Activated CD8-positive, alpha-beta T cell treated with anti-CD3 and anti-CD28 coated beads for 36 hours (primary cell): ENCODE measurements at regions of chr9 and their contacts with region 1.

Region 1: GRCh38 chr9:35611230-35611797 is 6.3 kb downstream of the TESK1 start:
- DNase-seq: peak; percentile 77
- ATAC-seq: peak; percentile 94
- H3K4me3 Mint-ChIP-seq: no peak overlapping the region
- H3K27ac Mint-ChIP-seq: no peak overlapping the region
- H3K4me1 Mint-ChIP-seq: peaks cover 16% of the 10 kb centered on the region
- H3K27me3 Mint-ChIP-seq: no peaks in the 10 kb centered on the region
- CTCF ChIP-seq: peak; percentile 79

Region 2: GRCh38 chr9:35193762-35194161 is 417.6 kb before region 1 on chr9:
- CTCF ChIA-PET with region 1: no interaction called
- POLR2A ChIA-PET with region 1: no interaction called
- intact Hi-C with region 1: no loop called
- DNase-seq: no peak
- ATAC-seq: no peak
- H3K4me3 Mint-ChIP-seq: no peak overlapping the region
- H3K27ac Mint-ChIP-seq: no peak overlapping the region
- H3K4me1 Mint-ChIP-seq: no peaks in the 10 kb centered on the region
- H3K27me3 Mint-ChIP-seq: no peaks in the 10 kb centered on the region
- CTCF ChIP-seq: no peak

Region 3: DNA sequence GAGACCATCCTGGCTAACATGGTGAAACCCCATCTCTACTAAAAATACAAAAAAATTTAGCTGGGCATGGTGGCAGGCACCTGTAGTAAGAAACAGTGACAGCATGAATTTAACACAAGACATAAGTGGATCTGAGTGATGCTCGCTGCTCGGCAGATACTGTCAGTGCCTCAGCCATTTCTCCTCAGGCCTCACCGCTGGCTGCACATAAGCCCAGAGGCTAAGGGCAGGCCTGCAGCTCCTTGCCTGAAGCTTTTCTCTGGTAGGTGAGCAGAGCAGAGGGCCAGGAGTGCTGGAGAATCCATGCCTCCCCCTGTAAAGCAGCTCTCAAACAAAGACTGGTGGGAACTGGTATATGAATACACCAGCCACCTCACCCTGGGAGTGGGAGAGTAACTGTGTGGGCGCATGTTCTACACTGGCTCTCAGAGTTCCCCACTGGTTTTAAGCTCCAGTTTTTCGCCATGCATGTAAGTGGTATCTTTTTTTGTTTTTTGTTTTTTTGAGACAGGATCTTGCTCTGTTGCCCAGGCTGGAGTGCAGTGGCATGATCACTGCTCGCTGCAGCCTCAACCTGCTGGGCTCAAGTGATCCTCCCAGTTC is 17.2 kb after region 1 on chr9:
- CTCF ChIA-PET with region 1: interaction called, 25 read pairs
- POLR2A ChIA-PET with region 1: interaction called, 3 read pairs
- intact Hi-C with region 1: no loop called
- DNase-seq: no peak
- ATAC-seq: no peak
- H3K4me3 Mint-ChIP-seq: no peak overlapping the region
- H3K27ac Mint-ChIP-seq: no peak overlapping the region
- H3K4me1 Mint-ChIP-seq: peaks cover 16% of the 10 kb centered on the region
- H3K27me3 Mint-ChIP-seq: no peaks in the 10 kb centered on the region
- CTCF ChIP-seq: no peak

Region 4: DNA sequence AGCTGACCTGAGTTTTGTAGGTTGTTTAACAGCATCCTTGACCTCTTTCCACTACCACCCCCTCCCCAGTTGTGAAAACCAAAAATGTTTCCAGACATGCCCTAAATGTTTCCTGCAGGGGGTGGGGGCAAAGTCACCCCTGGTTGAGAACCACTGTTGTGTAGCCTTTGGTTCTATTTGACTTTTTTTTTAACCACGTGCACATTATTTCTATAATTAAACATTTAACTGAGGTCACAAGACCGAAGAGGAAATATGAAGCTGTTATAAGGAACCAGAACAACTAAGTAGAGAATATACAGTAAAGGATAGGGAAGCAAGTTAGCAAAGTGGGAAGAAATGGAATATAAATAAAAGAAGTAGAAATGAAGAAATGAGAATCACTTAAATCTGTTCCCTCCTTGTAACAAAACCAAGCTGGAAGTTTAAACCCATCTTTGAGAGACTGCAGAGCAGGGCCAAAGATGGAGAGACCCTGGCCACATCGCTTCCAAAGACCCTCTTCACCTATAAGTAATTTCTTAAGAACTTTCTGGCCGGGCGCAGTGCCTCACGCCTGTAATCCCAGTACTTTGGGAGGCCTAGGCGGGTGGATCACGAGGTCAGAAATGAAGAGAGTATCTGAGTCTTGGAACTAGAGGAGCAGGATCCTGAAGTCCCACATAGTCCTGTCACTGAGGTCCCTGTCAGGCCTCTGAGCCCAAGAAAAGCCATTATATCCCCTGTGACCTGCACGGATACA is 25.0 kb after region 1 on chr9:
- CTCF ChIA-PET with region 1: interaction called, 25 read pairs
- POLR2A ChIA-PET with region 1: interaction called, 3 read pairs
- intact Hi-C with region 1: no loop called
- DNase-seq: no peak
- ATAC-seq: no peak
- H3K4me3 Mint-ChIP-seq: no peak overlapping the region
- H3K27ac Mint-ChIP-seq: peak overlapping the region; percentile 80
- H3K4me1 Mint-ChIP-seq: peaks cover 63% of the 10 kb centered on the region
- H3K27me3 Mint-ChIP-seq: no peaks in the 10 kb centered on the region
- CTCF ChIP-seq: no peak

Region 5: DNA sequence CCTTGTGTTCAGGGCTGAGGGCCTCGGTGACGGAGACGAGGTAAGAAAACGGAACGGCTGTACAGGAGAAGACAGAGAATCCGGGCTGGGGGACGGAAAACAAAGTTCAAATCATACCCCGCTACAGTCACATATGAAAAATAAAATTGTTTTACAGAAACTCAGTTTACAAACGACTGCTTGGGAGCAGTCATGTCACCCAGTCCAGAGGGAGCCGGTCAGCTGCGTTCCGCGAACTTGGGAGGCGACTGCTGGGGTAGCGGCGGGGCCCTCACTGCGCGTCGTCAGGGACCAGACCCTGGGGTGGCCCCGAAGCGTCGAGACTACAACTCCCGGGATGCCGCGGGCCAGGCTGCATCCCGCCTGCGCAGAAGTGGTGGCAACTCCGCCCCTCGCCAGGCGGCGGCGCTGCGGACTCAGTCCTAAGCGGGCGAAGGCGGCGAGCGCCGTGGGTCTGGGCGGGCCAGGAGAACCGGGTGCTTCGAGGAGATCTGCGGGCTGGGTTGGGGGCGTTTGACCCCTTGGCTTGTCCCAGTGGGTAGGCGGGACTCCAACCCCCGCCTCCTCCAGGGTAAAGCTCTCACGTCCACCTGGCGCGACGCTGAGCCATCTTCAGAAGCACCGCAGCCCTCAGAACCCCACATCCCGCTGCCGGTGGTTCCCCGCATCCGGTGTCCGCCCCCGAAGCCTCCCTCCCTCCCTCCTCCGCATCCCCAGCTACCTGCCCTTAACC is 35.4 kb after region 1 on chr9:
- CTCF ChIA-PET with region 1: interaction called, 62 read pairs
- POLR2A ChIA-PET with region 1: interaction called, 18 read pairs
- intact Hi-C with region 1: no loop called
- DNase-seq: peak; percentile 94
- ATAC-seq: peak; percentile 84
- H3K4me3 Mint-ChIP-seq: peak overlapping the region; percentile 85
- H3K27ac Mint-ChIP-seq: peak overlapping the region; percentile 79
- H3K4me1 Mint-ChIP-seq: peaks cover 44% of the 10 kb centered on the region
- H3K27me3 Mint-ChIP-seq: no peaks in the 10 kb centered on the region
- CTCF ChIP-seq: peak; percentile 83

Region 6: DNA sequence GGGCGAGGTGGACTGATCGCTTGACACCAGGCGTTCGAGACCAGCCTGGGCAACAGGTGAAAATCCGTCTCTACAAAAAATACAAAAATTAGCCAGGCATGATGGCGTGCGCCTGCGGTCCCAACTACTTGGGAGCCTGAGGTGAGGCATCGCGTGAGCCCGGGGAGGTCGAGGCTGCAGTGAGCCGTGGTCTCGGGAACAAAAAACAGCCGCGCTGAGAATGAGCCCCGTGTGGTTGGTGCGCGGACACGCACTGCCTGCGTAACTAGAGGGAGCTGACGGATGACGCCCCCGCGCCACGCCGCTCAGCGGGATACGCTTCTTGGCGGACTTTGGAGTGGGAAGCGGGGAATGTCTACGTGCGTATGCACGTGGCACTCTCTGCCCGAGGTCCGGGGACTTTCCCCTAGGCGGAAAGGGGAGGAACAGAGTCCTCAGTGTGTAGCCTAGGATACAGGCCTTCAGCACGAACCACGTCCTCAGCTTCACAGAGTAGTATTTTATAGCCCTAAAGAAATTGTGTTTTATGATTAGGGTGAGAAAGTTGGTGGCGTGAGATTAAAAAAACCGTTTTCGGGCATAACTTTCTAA is 46.3 kb after region 1 on chr9 and contains the start of gene RMRP:
- CTCF ChIA-PET with region 1: interaction called, 95 read pairs
- POLR2A ChIA-PET with region 1: interaction called, 4 read pairs
- intact Hi-C with region 1: no loop called
- DNase-seq: peak; percentile 97
- ATAC-seq: peak; percentile 95
- H3K4me3 Mint-ChIP-seq: peak within 1 kb of the TSS; percentile 81
- H3K27ac Mint-ChIP-seq: peak within 1 kb of the TSS; percentile 96
- H3K4me1 Mint-ChIP-seq: peaks cover 59% of the 10 kb centered on the region
- H3K27me3 Mint-ChIP-seq: peaks cover 2% of the 10 kb centered on the region
- CTCF ChIP-seq: no peak
- total RNA-seq, gene RMRP: 13,164 to 13,311 TPM

Region 7: GRCh38 chr9:35664531-35665470 is 53.5 kb after region 1 on chr9 and contains the start of gene ARHGEF39:
- CTCF ChIA-PET with region 1: interaction called, 95 read pairs
- POLR2A ChIA-PET with region 1: interaction called, 4 read pairs
- intact Hi-C with region 1: no loop called
- DNase-seq: peak; percentile 80
- ATAC-seq: peak; percentile 89
- H3K4me3 Mint-ChIP-seq: peak within 1 kb of the TSS; percentile 84
- H3K27ac Mint-ChIP-seq: peak within 1 kb of the TSS; percentile 63
- H3K4me1 Mint-ChIP-seq: peaks cover 40% of the 10 kb centered on the region
- H3K27me3 Mint-ChIP-seq: no peaks in the 10 kb centered on the region
- CTCF ChIP-seq: no peak
- total RNA-seq, gene ARHGEF39: 16.0 to 19.9 TPM

Region 8: GRCh38 chr9:35923927-35924763 is 312.8 kb after region 1 on chr9:
- CTCF ChIA-PET with region 1: no interaction called
- POLR2A ChIA-PET with region 1: no interaction called
- intact Hi-C with region 1: no loop called
- DNase-seq: peak; percentile 72
- ATAC-seq: peak; percentile 91
- H3K4me3 Mint-ChIP-seq: no peak overlapping the region
- H3K27ac Mint-ChIP-seq: no peak overlapping the region
- H3K4me1 Mint-ChIP-seq: peaks cover 17% of the 10 kb centered on the region
- H3K27me3 Mint-ChIP-seq: no peaks in the 10 kb centered on the region
- CTCF ChIP-seq: no peak

Region 9: GRCh38 chr9:36039696-36040095 is 428.4 kb after region 1 on chr9:
- CTCF ChIA-PET with region 1: no interaction called
- POLR2A ChIA-PET with region 1: no interaction called
- intact Hi-C with region 1: no loop called
- DNase-seq: no peak
- ATAC-seq: no peak
- H3K4me3 Mint-ChIP-seq: no peak overlapping the region
- H3K27ac Mint-ChIP-seq: no peak overlapping the region
- H3K4me1 Mint-ChIP-seq: peaks cover 56% of the 10 kb centered on the region
- H3K27me3 Mint-ChIP-seq: no peaks in the 10 kb centered on the region
- CTCF ChIP-seq: no peak